ENCODE measurements at regions of chr3 and their contacts with region 1.

Region 1: DNA sequence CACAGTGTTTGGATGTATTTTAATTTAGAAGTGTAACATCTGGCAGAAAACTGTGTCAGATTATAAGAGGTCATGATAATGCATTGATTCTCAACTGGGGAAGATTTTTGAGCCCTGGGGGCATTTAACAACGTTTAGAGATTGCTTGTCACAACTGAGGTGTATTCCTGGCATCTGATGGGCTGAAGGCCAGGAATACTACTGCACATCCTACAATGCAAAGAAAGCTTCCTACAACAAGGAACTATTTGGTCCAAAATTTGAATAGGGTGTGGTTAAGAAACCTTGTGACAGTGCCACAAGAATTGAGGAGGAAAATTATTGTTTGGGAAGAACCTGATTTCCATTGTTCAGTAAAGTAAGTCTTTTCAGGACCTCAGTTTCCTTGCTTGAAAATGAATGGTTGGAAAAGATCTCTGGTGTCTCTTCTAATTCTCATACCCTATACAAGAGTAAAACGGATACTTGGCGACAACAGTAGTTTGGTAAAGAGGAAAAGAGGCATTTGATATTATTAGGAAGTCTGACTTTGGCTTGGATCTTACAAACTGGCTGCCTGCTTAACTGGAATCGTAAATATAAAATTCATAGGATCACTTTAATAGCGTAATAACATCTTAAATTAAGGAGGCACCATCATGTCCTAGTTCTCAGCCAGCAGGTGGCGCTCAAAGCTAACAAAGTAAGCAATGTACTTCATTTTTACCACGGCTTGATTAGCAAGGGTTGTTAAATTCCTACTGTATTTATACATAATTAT is 4.3 kb downstream of the DAZL start:
- DNase-seq: peak; percentile 41 to 60
- H3K4me3 ChIP-seq: no peak overlapping the region
- H3K27ac ChIP-seq: no peak overlapping the region
- H3K4me1 ChIP-seq: peaks cover 8% of the 10 kb centered on the region
- H3K27me3 ChIP-seq: no peaks in the 10 kb centered on the region
- CTCF ChIP-seq: peak; percentile 97

Region 2: DNA sequence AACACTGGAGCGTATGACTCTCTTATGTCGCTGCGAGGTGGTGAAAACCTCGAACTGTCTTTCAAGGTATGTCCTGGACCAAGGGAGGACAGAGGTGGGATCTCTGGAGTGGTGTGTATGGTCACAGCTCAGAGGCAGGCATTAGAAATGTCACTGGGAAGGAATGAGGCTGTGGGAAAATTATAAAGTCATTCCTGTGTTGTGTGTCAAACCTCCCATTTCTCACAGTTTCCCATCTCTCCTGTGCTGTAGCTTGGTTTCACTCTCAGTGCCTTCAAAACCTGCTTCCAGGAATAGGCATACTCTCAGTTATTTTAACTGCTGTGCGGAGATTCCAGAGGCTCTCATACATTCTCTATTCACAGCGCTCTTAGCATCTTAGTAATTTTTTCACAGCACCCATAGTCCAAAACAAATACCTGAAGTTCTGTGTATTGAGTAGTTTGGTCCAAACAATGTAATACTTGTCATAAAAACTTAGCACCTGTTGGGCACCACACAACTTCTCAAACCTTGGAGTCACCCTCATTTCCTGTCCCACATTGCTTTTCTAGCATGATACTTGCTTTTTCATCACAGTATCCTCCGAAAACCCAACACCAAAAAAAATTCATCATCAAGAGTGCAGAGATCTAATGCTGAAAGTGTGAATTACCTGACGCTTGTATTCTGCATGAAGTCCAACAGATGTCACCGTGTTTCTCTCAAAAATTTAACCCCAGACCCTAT is 389.6 kb before region 1 on chr3:
- CTCF ChIA-PET with region 1: no interaction called
- POLR2A ChIA-PET with region 1: no interaction called
- intact Hi-C with region 1: no loop called
- DNase-seq: no peak
- H3K4me3 ChIP-seq: no peak overlapping the region
- H3K27ac ChIP-seq: no peak overlapping the region
- H3K4me1 ChIP-seq: no peaks in the 10 kb centered on the region
- H3K27me3 ChIP-seq: no peaks in the 10 kb centered on the region
- CTCF ChIP-seq: no peak

Region 3: DNA sequence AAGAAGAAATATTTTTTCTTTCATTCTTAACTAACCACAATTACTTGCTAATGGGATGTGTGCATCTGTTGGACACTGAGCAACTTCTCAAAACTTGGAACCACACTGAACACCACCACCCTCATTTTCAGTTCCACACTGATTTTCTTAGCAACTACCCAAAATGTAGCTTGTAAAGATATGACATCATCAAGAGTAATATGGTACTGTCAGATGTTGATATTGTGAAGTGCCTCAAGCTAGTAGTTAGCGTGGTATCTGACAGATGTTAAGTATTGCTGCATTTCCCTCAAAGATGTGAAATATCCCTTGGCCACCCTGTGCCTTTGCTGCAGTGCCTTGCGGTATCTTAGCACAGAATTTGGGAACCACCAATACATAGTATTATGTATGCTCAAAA is 96.7 kb before region 1 on chr3:
- CTCF ChIA-PET with region 1: no interaction called
- POLR2A ChIA-PET with region 1: no interaction called
- intact Hi-C with region 1: no loop called
- DNase-seq: no peak
- H3K4me3 ChIP-seq: no peak overlapping the region
- H3K27ac ChIP-seq: no peak overlapping the region
- H3K4me1 ChIP-seq: no peaks in the 10 kb centered on the region
- H3K27me3 ChIP-seq: peaks cover 46% of the 10 kb centered on the region
- CTCF ChIP-seq: no peak

Region 4: GRCh38 chr3:16697443-16698147 is 96.6 kb after region 1 on chr3:
- CTCF ChIA-PET with region 1: no interaction called
- POLR2A ChIA-PET with region 1: no interaction called
- intact Hi-C with region 1: no loop called
- DNase-seq: no peak
- H3K4me3 ChIP-seq: no peak overlapping the region
- H3K27ac ChIP-seq: no peak overlapping the region; the same call in 1 of the 2 replicates
- H3K4me1 ChIP-seq: peaks cover 18% of the 10 kb centered on the region
- H3K27me3 ChIP-seq: no peaks in the 10 kb centered on the region
- CTCF ChIP-seq: no peak

Region 5: DNA sequence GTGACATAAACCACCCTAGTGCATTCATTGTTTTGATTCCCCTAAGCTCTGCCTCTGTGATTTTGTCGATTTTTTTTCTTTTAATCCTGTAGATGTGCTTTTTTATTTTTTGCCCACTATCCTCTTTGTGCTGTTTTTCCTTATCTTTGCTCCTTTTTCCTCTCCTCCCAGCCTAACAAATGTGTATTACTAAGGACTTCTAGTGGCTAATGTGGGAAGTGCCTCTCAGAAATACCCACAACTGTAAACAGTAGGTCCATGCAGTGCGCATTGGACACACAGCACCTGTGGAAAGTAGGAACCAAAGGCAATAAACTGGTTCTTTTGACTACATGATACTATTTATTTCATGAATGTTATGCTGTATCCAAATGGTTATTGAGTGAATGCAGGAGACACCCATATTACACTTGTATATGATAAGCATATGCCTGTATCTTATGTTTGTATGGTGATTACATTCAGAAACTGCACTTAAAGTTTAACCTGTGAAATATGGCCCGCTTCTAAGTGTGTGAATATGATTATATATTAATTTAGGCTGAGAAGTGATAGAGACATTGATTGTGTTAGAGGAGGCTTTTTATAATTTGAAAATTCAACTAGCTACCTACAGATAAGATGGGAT is 431.6 kb after region 1 on chr3:
- CTCF ChIA-PET with region 1: interaction called, 3 read pairs
- POLR2A ChIA-PET with region 1: no interaction called
- intact Hi-C with region 1: loop called (anchors 1 kb)
- DNase-seq: no peak
- H3K4me3 ChIP-seq: no peak overlapping the region
- H3K27ac ChIP-seq: no peak overlapping the region
- H3K4me1 ChIP-seq: peaks cover 6% of the 10 kb centered on the region
- H3K27me3 ChIP-seq: no peaks in the 10 kb centered on the region
- CTCF ChIP-seq: peak; percentile 71

Region 6: GRCh38 chr3:17233398-17233800 is 632.4 kb after region 1 on chr3:
- CTCF ChIA-PET with region 1: no interaction called
- POLR2A ChIA-PET with region 1: no interaction called
- intact Hi-C with region 1: loop called (anchors 1 kb)
- DNase-seq: peak; percentile 6 to 69
- H3K4me3 ChIP-seq: no peak overlapping the region
- H3K27ac ChIP-seq: no peak overlapping the region
- H3K4me1 ChIP-seq: peaks cover 14% of the 10 kb centered on the region
- H3K27me3 ChIP-seq: no peaks in the 10 kb centered on the region
- CTCF ChIP-seq: peak; percentile 89

Region 7: GRCh38 chr3:17412950-17413530 is 812.1 kb after region 1 on chr3:
- CTCF ChIA-PET with region 1: no interaction called
- POLR2A ChIA-PET with region 1: no interaction called
- intact Hi-C with region 1: loop called (anchors 1 kb)
- DNase-seq: peak in 1 of 2 experiments; percentile 8
- H3K4me3 ChIP-seq: no peak overlapping the region
- H3K27ac ChIP-seq: no peak overlapping the region
- H3K4me1 ChIP-seq: no peaks in the 10 kb centered on the region
- H3K27me3 ChIP-seq: no peaks in the 10 kb centered on the region
- CTCF ChIP-seq: peak; percentile 91